ENCODE measurements at regions of chr10 and their contacts with region 1.

Region 1: GRCh38 chr10:83312570-83312969 is 826.7 kb upstream of the GHITM start:
- DNase-seq: no peak
- H3K4me3 ChIP-seq: no peak overlapping the region
- H3K27ac ChIP-seq: no peak overlapping the region
- H3K4me1 ChIP-seq: peaks cover 6% of the 10 kb centered on the region
- H3K27me3 ChIP-seq: no peaks in the 10 kb centered on the region
- CTCF ChIP-seq: no peak
- EP300 ChIP-seq: no peak
- POLR2A ChIP-seq: no peak

Region 2: DNA sequence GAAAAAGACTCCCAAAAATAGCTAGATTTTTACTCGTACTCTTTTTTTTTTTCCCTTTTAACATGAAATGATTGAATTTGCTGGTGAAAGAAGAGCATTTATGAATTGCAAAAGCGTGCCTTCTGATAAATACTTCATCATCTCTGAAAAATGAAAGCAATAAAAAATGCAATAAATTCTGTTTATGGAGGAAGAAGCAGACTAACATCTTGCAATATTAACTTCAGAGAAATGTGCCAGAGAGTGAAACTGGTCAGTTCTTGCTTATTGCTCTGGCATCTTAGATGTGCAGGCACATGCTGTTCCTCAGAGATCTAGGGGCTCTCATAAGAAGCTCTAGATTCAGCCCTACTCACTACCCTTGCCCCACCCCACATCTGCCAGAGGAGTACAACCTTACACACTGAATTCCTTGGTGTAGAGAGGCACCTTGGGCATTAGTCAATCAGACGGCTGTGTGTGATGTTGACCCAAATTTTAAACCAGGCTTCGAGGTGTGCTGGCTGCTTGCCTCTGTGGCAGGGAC is 64.4 kb before region 1 on chr10:
- intact Hi-C with region 1: no loop called
- DNase-seq: no peak
- H3K4me3 ChIP-seq: no peak overlapping the region
- H3K27ac ChIP-seq: no peak overlapping the region
- H3K4me1 ChIP-seq: peaks cover 3% of the 10 kb centered on the region
- H3K27me3 ChIP-seq: no peaks in the 10 kb centered on the region
- CTCF ChIP-seq: no peak
- EP300 ChIP-seq: no peak
- POLR2A ChIP-seq: no peak

Region 3: DNA sequence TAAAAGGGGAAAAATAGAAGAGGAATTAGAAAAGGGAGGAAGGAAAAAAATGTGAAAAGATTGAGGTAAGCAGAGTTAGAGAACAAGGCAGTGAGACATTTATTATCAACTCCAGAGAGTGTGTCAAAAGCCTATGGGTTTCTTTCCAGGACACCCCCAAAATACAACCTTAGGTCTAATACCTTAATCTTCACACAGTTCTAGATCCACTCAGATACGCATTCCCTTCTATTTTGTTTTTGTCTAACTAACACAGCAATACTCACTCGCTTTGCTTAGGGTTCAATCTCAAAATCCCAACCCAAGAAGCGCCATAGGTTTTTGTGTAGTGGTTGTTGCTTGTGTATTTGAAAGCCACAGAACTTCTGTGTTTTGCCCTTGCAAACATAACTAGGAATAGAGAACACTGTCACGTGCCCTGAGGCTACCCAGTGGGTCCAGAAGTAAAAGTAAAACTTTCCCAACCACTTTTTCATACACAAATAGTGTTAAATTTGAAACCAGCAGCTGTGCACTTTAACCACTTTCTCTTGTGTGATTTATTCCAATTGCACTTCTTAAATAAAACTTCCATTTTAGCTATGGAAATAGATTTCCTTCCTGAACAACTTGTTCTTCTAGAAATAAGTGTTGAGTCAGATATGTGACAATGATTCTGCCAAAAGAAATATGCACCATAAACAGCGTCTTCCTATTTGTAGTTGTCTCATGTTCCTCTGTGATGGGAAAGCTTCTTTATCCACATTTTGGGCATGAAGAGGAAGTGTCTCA is 412.1 kb after region 1 on chr10:
- intact Hi-C with region 1: loop called in 1 of 4 experiments (anchors 1 kb)
- DNase-seq: no peak
- H3K4me3 ChIP-seq: no peak overlapping the region
- H3K27ac ChIP-seq: no peak overlapping the region
- H3K4me1 ChIP-seq: no peaks in the 10 kb centered on the region
- H3K27me3 ChIP-seq: no peaks in the 10 kb centered on the region
- CTCF ChIP-seq: no peak
- EP300 ChIP-seq: no peak
- POLR2A ChIP-seq: no peak